Activated T-helper 1 cell treated with anti-CD3 and anti-CD28 coated beads, Interleukin-12 subunit alpha, Interleukin-12 subunit beta, Interleukin-2, Interleukin-4 antibody, amounts not matched to agents 30 ng/mL and 10 ng/mL and 1 ng/mL, durations not matched to agents 14 hours and 24 hours and 36 hours (primary cell): ENCODE measurements at regions of chr22 and their contacts with region 1.

Region 1: DNA sequence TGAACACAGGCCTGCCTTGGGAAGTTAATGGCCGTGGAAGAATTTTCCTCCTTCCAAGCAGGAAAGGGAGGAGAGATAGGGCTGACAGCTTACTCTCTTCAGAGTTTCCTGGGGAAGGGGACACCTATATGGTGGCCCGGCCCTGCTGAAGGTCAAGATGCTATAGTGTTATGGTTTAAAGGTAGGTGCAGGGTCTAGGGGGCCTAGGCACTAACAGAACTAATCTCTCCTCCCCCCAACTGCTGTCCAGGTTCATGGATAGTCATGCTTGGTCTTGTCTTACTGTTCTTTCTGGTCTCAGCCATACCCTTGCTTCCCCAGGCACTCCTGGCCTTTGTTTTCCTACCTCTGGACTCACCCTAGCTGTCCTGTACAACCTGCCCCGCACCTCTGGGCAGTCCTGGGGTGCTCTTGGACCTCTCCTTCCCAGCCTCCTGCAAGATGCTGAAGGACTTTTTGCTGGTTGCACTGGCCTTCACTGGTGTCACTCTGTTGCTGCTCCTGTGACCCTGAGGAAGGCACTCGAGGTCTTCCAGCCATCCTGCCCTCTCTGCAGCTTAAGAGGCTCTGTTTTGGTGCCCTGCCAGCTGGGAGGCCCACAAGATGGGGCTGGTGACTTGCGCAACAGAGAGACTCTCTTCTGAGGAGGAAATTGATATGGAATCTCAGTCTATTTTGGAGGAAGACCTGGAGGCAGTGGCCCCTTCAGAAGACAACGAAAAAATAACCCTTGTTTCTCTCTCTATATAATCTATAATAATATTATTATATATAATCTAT is 17.9 kb downstream of the SEC14L3 start:
- DNase-seq: no peak
- H3K4me3 Mint-ChIP-seq: no peak overlapping the region
- H3K27ac Mint-ChIP-seq: no peak overlapping the region
- H3K4me1 Mint-ChIP-seq: peaks cover 7% of the 10 kb centered on the region
- H3K27me3 Mint-ChIP-seq: peaks cover 18% of the 10 kb centered on the region

Region 2: DNA sequence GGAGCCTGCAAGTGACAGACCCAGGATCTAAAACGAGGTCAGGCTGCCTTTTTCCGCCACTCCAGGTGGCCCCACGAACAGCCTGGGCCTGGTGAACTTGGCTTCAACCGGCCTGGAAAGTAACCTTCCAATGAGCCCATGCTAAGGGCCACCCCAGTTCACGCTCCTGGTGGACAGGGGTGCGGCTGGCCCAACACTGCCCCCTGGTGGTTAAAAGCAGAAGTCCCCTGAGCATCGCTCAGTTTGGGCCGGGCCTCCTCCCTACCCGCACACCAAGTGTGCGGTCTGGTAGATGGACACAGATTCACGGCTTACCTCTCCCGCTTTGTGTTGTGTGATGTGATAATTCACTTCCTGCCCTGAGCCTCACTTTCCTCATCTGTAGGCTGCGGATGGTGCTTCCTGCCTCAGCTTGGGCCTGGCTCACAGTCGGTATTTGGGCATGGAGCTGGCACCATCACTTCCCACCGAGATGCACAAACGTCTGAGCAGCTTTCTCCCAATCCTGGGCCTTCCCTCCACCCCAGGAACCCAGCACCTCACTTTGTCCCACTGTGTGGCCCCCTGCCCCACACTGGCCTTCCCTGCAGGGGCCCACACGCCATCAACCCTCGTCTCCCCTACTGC is 31.6 kb after region 1 on chr22:
- intact Hi-C with region 1: loop called (anchors 2 kb)
- DNase-seq: peak; percentile 70
- H3K4me3 Mint-ChIP-seq: no peak overlapping the region
- H3K27ac Mint-ChIP-seq: no peak overlapping the region
- H3K4me1 Mint-ChIP-seq: no peaks in the 10 kb centered on the region
- H3K27me3 Mint-ChIP-seq: peaks cover 4% of the 10 kb centered on the region

Region 3: GRCh38 chr22:30531651-30532608 is 78.0 kb after region 1 on chr22:
- intact Hi-C with region 1: no loop called
- DNase-seq: no peak
- H3K4me3 Mint-ChIP-seq: no peak overlapping the region
- H3K27ac Mint-ChIP-seq: no peak overlapping the region
- H3K4me1 Mint-ChIP-seq: peaks cover 5% of the 10 kb centered on the region
- H3K27me3 Mint-ChIP-seq: no peaks in the 10 kb centered on the region